Breast epithelium (tissue), 4 donors: ENCODE measurements at regions of chr2 and their contacts with region 1.

Region 1: DNA sequence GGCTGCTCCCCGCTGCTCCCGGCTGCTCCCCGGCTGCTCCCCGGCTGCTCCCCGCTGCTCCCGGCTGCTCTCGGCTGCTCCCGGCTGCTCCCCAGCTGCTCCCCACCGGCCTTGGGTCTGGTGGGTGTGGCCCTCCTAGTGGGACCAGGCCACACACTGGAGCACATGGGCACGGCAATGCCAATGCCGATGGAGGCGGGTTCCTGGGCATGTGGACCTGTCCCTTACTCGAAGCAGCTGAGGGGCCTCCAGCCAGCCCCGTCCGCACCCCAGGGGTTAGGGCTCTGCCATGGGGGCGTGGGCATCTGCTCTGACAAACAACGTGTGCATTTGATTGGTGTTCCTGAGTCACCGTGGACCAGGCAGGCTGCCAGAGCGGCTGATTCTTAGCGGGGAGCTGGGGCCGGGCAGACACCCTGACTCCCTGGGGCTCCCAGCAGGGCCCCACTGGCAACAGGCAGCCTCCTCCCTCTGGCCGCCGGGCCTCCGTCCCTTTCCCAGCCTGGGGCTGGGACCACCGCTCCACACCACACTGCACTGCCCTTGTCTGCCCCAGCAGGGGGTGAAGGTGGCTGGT is 1.9 kb upstream of the GAL3ST2 start:
- DNase-seq: peak in 1 of 2 donors; percentile 15
- H3K4me3 ChIP-seq: no peak overlapping the region
- H3K27ac ChIP-seq: no peak overlapping the region
- H3K4me1 ChIP-seq: no peaks in the 10 kb centered on the region
- H3K27me3 ChIP-seq: peaks cover 0 to 16% of the 10 kb centered on the region in 2 donors
- CTCF ChIP-seq: no peak
- POLR2A ChIP-seq: no peak

Region 2: GRCh38 chr2:241129086-241129871 is 645.5 kb before region 1 on chr2:
- intact Hi-C with region 1: no loop called
- DNase-seq: no peak
- H3K4me3 ChIP-seq: no peak overlapping the region
- H3K27ac ChIP-seq: no peak overlapping the region
- H3K4me1 ChIP-seq: no peaks in the 10 kb centered on the region
- H3K27me3 ChIP-seq: no peaks in the 10 kb centered on the region
- CTCF ChIP-seq: no peak
- POLR2A ChIP-seq: no peak

Region 3: DNA sequence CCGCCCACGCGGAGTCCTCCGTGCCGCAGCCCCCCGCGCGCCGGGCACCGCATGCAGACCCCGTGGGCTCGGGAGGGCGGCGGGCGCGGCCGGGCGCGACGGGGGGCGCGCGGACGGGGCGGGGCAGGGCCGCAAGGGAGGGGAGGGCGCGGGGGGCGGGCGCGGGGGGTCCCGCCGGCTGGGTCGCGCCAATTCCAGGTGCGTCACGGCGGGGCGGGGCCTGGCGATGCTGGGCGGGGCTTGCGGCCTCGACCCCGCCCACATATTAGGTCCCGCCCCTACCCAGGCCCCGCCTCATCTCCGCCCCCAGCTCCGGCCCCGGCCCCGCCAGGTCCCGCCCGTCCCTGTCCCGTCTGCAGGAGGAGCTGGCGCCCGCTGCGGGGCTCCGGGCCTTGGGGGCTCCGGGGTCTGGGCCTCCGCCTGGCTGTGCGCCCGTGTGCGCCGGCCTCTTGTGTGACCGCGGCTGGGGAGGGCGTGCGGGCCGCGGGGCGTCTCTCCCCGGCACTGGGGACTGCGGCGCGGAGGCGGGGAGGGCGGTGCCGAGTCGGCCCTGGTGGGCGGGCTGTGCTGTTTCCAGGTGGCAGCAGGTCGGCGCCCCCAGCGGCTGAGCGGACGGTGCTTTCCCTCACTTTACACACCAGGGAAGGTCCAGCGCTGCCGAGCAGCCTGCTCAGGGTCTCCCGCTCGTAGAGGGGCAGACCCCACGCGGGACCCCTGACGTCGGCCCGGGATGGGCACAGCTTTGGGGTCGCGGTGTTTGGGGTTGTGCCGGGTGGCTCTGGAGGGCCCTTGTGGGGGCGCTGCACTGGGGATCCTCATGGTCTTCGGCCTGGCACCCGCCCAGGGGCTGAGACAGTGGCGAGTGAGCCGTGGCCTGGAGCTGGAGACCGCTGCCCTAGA is 72.4 kb before region 1 on chr2:
- intact Hi-C with region 1: no loop called
- DNase-seq: peak; percentile 76 to 88
- H3K4me3 ChIP-seq: peak overlapping the region; percentile 70 to 98 (median 92)
- H3K27ac ChIP-seq: peak overlapping the region; percentile 91 to 98
- H3K4me1 ChIP-seq: peaks cover 0 to 6% of the 10 kb centered on the region in 2 donors
- H3K27me3 ChIP-seq: no peaks in the 10 kb centered on the region
- CTCF ChIP-seq: peak in 2 of 3 donors; percentile 27 to 29
- POLR2A ChIP-seq: no peak

Region 4: DNA sequence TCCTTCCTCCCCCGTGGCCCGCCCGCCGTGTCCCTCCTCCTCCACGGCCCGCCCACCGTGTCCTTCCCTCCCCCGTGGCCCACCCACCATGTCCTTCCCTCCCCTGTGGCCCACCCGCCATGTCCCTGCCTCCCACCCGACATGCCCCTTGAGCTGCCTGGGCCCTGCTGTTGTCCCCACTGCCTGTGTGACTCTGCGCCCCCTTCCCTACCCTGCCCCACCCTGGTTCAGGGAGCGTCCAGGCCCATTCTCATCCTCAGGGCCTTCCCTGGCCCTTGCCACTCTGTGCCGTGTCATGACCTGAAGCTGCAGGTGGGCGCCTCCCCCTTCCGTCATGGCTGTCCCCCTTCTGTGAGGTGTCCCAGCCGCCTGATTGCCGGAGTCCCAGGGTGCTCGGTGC is 19.6 kb before region 1 on chr2:
- intact Hi-C with region 1: loop called (anchors 1 kb)
- DNase-seq: no peak
- H3K4me3 ChIP-seq: no peak overlapping the region
- H3K27ac ChIP-seq: no peak overlapping the region
- H3K4me1 ChIP-seq: no peaks in the 10 kb centered on the region
- H3K27me3 ChIP-seq: no peaks in the 10 kb centered on the region
- CTCF ChIP-seq: no peak
- POLR2A ChIP-seq: no peak

Region 5: DNA sequence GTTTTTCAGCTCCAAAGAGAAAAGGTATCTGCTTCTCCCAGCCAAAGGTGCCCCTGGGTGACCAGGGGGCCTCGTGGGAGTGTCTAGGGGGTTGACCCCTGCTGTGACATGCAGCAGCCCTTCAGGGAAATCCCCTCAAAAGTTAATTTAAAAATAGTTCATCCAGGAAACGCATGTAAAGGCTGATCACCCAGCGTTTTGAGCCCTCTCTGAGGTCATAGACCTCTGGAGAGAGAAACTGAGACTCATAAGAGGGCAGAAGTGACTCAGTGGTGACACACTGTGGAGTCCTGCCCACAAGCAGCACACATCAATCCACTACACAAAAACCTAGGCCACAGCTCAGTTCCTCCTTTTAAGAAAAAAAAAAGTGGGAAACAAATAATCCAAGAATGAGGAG is 13.8 kb after region 1 on chr2:
- intact Hi-C with region 1: no loop called
- DNase-seq: peak in 1 of 2 donors; percentile 8
- H3K4me3 ChIP-seq: no peak overlapping the region
- H3K27ac ChIP-seq: no peak overlapping the region
- H3K4me1 ChIP-seq: no peaks in the 10 kb centered on the region
- H3K27me3 ChIP-seq: no peaks in the 10 kb centered on the region
- CTCF ChIP-seq: no peak
- POLR2A ChIP-seq: no peak

Region 6: GRCh38 chr2:241803387-241804325 is 28.9 kb after region 1 on chr2:
- intact Hi-C with region 1: no loop called
- DNase-seq: no peak
- H3K4me3 ChIP-seq: peak overlapping the region; percentile 40 to 69 (median 42)
- H3K27ac ChIP-seq: no peak overlapping the region
- H3K4me1 ChIP-seq: no peaks in the 10 kb centered on the region
- H3K27me3 ChIP-seq: peaks cover 0 to 23% of the 10 kb centered on the region in 2 donors
- CTCF ChIP-seq: no peak
- POLR2A ChIP-seq: no peak